ENCODE measurements at regions of chr2 and their contacts with region 1.

Region 1: DNA sequence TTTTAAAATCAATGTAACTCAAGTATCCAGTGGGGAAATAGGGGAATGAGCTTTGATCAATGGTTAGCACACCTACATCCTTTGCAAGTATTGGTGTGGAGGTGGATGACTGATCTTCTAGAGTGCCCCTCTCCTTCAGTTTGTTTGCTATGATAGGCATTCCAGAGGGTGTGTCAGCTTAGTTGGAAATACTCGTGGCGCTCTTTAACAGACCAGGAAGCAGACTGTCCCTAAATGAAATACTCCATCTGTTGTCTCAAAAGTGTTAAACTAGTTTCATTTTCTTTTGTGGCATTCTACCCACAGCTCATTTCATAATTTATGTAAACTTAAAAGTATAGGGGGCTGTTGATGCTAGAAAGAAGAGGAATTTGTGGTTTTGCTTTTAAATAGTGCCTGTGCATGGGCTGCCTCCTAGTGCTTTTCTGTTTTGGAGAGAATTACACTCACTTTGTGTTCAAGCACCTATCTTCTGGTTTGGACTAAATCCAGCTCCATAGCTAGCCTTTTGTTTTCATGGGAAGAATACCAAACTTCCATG is 66.2 kb downstream of the STAT1 start:
- DNase-seq: no peak
- ATAC-seq: peak; percentile 72
- H3K4me3 Mint-ChIP-seq: no peak overlapping the region
- H3K27ac Mint-ChIP-seq: peak overlapping the region; percentile 41
- H3K4me1 Mint-ChIP-seq: peaks cover 12% of the 10 kb centered on the region
- H3K27me3 Mint-ChIP-seq: peaks cover 5% of the 10 kb centered on the region

Region 2: DNA sequence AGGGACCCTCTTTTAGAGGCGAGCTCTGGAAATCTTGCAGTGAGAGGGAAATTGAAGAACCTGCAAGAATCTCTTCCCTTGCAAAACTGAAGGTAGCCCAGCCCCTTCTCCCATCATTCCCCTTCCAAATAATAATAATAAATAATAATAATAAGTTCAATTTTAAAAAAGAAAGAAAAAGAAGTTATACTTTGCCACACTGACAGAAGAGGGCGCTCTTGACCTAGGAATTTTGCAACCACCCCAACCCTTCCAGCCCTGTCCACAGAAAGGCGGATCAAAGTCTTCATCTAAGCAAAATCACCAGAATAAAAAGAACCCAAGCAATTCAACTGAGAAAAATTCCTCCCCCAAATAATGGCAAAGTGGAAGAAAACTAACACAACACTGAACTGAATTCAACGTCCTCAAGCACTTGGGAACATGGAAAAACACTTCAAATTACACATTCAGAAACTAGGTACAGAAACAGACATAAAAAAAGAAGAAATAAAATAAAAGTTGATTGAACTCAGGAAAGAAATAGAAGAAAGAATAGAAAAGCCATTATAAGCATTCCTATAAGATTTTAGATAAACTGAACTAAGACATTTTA is 166.1 kb before region 1 on chr2:
- CTCF ChIA-PET with region 1: interaction called, 44 read pairs
- POLR2A ChIA-PET with region 1: interaction called, 6 read pairs
- DNase-seq: peak; percentile 70
- ATAC-seq: peak; percentile 53
- H3K4me3 Mint-ChIP-seq: no peak overlapping the region
- H3K27ac Mint-ChIP-seq: no peak overlapping the region
- H3K4me1 Mint-ChIP-seq: peaks cover 3% of the 10 kb centered on the region
- H3K27me3 Mint-ChIP-seq: peaks cover 6% of the 10 kb centered on the region

Region 3: GRCh38 chr2:190849774-190850173 is 98.0 kb before region 1 on chr2:
- CTCF ChIA-PET with region 1: interaction called, 51 read pairs
- POLR2A ChIA-PET with region 1: interaction called, 3 read pairs
- DNase-seq: no peak
- ATAC-seq: no peak
- H3K4me3 Mint-ChIP-seq: no peak overlapping the region
- H3K27ac Mint-ChIP-seq: no peak overlapping the region
- H3K4me1 Mint-ChIP-seq: no peaks in the 10 kb centered on the region
- H3K27me3 Mint-ChIP-seq: peaks cover 2% of the 10 kb centered on the region

Region 4: GRCh38 chr2:190887089-190887488 is 60.7 kb before region 1 on chr2:
- CTCF ChIA-PET with region 1: interaction called, 24 read pairs
- POLR2A ChIA-PET with region 1: interaction called, 19 read pairs
- DNase-seq: no peak
- ATAC-seq: no peak
- H3K4me3 Mint-ChIP-seq: no peak overlapping the region
- H3K27ac Mint-ChIP-seq: no peak overlapping the region
- H3K4me1 Mint-ChIP-seq: peaks cover 66% of the 10 kb centered on the region
- H3K27me3 Mint-ChIP-seq: no peaks in the 10 kb centered on the region

Measured in activated CD8-positive, alpha-beta T cell treated with anti-CD3 and anti-CD28 coated beads, Interleukin-2, amount 10 ng/mL, durations not matched to agents 7 days and 5 days (primary cell).